ENCODE measurements at regions of chr16 and their contacts with region 1.

Region 1: GRCh38 chr16:6541267-6541666 is 791.4 kb upstream of the RBFOX1 start:
- DNase-seq: no peak
- H3K4me3 ChIP-seq: no peak overlapping the region
- H3K27ac ChIP-seq: no peak overlapping the region
- H3K4me1 ChIP-seq: no peaks in the 10 kb centered on the region
- H3K27me3 ChIP-seq: no peaks in the 10 kb centered on the region
- CTCF ChIP-seq: no peak
- EP300 ChIP-seq: no peak
- POLR2A ChIP-seq: no peak

Region 2: GRCh38 chr16:6111390-6111789 is 429.9 kb before region 1 on chr16:
- intact Hi-C with region 1: loop called in 1 of 4 experiments (anchors 5 kb)
- DNase-seq: no peak
- H3K4me3 ChIP-seq: no peak overlapping the region
- H3K27ac ChIP-seq: no peak overlapping the region
- H3K4me1 ChIP-seq: no peaks in the 10 kb centered on the region
- H3K27me3 ChIP-seq: no peaks in the 10 kb centered on the region
- CTCF ChIP-seq: no peak
- EP300 ChIP-seq: no peak
- POLR2A ChIP-seq: no peak

Region 3: GRCh38 chr16:6573577-6573976 is 32.3 kb after region 1 on chr16:
- intact Hi-C with region 1: no loop called
- DNase-seq: no peak
- H3K4me3 ChIP-seq: no peak overlapping the region
- H3K27ac ChIP-seq: no peak overlapping the region
- H3K4me1 ChIP-seq: no peaks in the 10 kb centered on the region
- H3K27me3 ChIP-seq: no peaks in the 10 kb centered on the region
- CTCF ChIP-seq: no peak
- EP300 ChIP-seq: no peak
- POLR2A ChIP-seq: no peak

Measured in ovary (tissue), 10 donors.